Cardiac septum (tissue), 1 donor: ENCODE measurements at regions of chr11 and their contacts with region 1.

Region 1: GRCh38 chr11:128290106-128290840 is 297.1 kb downstream of the ETS1 start:
- DNase-seq: no peak

Region 2: DNA sequence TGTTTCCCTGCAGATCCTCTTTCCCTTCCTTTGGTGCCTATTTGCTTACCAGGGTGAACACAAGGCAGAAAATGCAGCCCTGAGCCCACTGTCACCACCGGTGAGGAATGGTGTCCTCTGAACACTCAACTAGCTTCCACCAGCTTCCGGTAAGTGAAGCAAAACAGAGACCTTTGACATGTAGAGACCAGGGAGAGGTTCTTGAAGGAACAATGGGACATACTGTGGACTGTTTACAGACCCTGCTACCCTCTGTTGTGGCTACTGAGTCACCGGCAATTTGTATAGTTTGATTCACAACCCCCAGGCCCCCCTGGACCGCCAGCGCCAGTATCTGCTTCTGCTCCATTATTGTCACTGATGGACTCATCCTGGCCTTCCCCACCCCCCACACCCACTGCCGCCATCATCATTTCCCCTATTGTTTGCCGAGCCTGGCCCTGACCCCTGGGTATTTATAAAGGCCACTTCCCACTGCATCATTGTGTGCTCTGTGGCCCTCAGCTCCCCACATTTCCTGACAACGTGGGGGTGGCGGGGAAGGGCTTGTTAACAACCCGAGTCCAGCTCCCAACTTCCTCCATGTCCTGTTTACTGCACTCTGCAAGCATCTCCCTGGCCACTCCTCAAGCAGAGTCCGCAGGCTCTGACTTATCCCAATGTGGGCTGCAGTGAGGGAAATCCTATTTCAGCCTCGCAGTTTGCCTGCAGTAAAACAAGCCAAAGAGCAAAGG is 44.2 kb after region 1 on chr11:
- intact Hi-C with region 1: loop called (anchors 5 kb)
- DNase-seq: peak; percentile 83

Region 3: GRCh38 chr11:128375961-128376360 is 85.7 kb after region 1 on chr11:
- intact Hi-C with region 1: no loop called
- DNase-seq: no peak

Region 4: GRCh38 chr11:128467610-128468041 is 177.4 kb after region 1 on chr11:
- intact Hi-C with region 1: loop called (anchors 10 kb)
- DNase-seq: no peak

Region 5: GRCh38 chr11:128552783-128553661 is 262.7 kb after region 1 on chr11:
- intact Hi-C with region 1: loop called (anchors 5 kb)
- DNase-seq: no peak

Region 6: GRCh38 chr11:128630367-128631230 is 340.3 kb after region 1 on chr11:
- intact Hi-C with region 1: loop called (anchors 1 kb)
- DNase-seq: peak; percentile 95

Region 7: GRCh38 chr11:128695539-128696221 is 405.4 kb after region 1 on chr11:
- intact Hi-C with region 1: loop called (anchors 5 kb)
- DNase-seq: peak; percentile 87

Region 8: GRCh38 chr11:128831174-128832120 is 541.2 kb after region 1 on chr11:
- intact Hi-C with region 1: loop called (anchors 10 kb)
- DNase-seq: peak; percentile 89